Common myeloid progenitor, CD34-positive (primary cell): ENCODE measurements at regions of chr11 and their contacts with region 1.

Region 1: GRCh38 chr11:61947486-61948210 is 2.5 kb upstream of the BEST1 start:
- DNase-seq: peak; percentile 77 to 85 (median 78)
- H3K4me3 ChIP-seq: no peak overlapping the region
- H3K27ac ChIP-seq: no peak overlapping the region
- H3K4me1 ChIP-seq: peaks cover 0 to 5% (median 1%) of the 10 kb centered on the region in 4 experiments
- H3K27me3 ChIP-seq: no peaks in the 10 kb centered on the region

Region 2: GRCh38 chr11:61587521-61588453 is 359.9 kb before region 1 on chr11:
- CTCF ChIA-PET with region 1: no interaction called
- POLR2A ChIA-PET with region 1: no interaction called
- DNase-seq: peak; percentile 17 to 42 (median 41)
- H3K4me3 ChIP-seq: peak overlapping the region in 3 of 7 experiments; percentile 24 to 54 (median 29)
- H3K27ac ChIP-seq: no peak overlapping the region
- H3K4me1 ChIP-seq: peaks cover 0 to 16% (median 7%) of the 10 kb centered on the region in 4 experiments
- H3K27me3 ChIP-seq: peaks cover 0 to 77% (median 42%) of the 10 kb centered on the region in 5 experiments

Region 3: DNA sequence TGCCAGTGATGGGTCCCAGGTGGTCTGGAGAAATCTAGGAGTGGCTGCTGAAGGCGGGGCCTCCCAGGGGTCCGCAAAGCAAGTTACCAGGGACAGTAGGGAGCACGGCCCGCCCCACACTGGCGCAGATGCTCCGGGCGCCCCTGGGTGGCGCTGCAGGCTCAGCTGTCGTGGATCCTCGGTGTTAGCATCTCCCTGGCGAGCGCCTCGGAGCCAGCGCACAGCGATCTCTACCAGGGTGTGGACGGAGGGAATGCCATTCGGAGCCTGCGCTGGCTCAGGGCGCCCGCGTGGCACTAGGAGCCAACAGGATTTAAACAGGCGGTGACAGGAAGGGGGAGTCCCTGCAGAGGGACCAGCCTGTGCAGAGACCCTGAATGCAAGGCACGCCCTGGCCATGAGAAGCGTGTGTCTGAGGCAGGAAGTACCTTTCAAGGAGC is 76.5 kb before region 1 on chr11:
- CTCF ChIA-PET with region 1: interaction called, 14 read pairs
- POLR2A ChIA-PET with region 1: no interaction called
- DNase-seq: peak; percentile 65 to 76 (median 76)
- H3K4me3 ChIP-seq: peak overlapping the region in 4 of 7 experiments; percentile 26 to 72 (median 47)
- H3K27ac ChIP-seq: no peak overlapping the region
- H3K4me1 ChIP-seq: peaks cover 0 to 14% (median 6%) of the 10 kb centered on the region in 4 experiments
- H3K27me3 ChIP-seq: peaks cover 0 to 2% (median 0%) of the 10 kb centered on the region in 5 experiments

Region 4: GRCh38 chr11:61899146-61899841 is 48.4 kb before region 1 on chr11:
- CTCF ChIA-PET with region 1: interaction called, 380 read pairs
- POLR2A ChIA-PET with region 1: interaction called, 5 read pairs
- DNase-seq: peak; percentile 87 to 94 (median 92)
- H3K4me3 ChIP-seq: no peak overlapping the region
- H3K27ac ChIP-seq: no peak overlapping the region
- H3K4me1 ChIP-seq: peaks cover 0 to 7% (median 2%) of the 10 kb centered on the region in 4 experiments
- H3K27me3 ChIP-seq: peaks cover 0 to 2% (median 0%) of the 10 kb centered on the region in 5 experiments

Region 5: DNA sequence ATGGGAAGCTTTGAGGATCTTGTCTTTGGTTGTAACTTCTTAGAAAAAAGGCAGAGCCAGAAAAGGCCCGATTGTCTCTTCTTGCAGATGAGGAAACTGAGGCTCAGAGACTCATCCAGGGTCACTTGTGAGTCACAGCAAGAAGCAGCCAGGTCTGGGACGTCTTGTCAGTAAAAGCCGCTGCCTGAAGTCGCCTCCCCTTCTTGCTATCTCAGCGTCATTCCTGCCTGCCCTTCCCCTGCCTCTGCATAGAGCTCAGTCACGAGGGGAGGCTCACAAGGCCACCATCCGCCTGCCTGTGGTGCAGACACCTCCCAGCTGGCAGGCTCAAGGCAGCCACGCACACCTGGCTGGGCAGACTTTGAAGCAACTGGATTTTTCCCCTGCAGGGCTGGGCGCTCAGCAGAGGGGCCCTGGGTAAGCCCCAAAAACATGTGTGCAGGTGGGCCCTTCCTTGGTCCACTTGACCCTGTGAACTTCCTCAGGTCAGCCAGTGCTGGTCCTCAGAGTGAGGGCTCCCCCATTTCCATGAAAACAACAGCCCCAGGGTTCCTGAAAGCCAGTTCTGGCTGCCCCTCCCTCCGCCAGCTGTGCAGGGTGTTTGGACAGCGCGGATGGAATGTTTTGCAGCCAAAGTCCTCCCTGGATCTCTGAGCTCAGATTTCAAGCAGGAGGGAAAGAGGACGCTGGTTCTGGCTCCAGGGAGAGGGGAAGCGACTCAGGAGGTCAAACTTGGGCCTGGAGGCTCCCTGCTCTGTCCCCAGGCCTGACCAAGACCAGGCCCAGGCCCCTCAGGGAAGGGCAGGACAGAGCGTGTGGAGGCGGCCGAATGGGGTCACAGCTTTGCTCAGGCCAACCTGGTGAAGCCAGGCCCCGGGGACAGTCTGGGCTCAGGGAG is 24.2 kb before region 1 on chr11:
- CTCF ChIA-PET with region 1: interaction called, 23 read pairs
- POLR2A ChIA-PET with region 1: no interaction called
- DNase-seq: peak in 2 of 3 donors; percentile 43 to 69
- H3K4me3 ChIP-seq: no peak overlapping the region
- H3K27ac ChIP-seq: no peak overlapping the region
- H3K4me1 ChIP-seq: peaks cover 0 to 21% (median 6%) of the 10 kb centered on the region in 4 experiments
- H3K27me3 ChIP-seq: peaks cover 0 to 15% (median 0%) of the 10 kb centered on the region in 5 experiments

Region 6: DNA sequence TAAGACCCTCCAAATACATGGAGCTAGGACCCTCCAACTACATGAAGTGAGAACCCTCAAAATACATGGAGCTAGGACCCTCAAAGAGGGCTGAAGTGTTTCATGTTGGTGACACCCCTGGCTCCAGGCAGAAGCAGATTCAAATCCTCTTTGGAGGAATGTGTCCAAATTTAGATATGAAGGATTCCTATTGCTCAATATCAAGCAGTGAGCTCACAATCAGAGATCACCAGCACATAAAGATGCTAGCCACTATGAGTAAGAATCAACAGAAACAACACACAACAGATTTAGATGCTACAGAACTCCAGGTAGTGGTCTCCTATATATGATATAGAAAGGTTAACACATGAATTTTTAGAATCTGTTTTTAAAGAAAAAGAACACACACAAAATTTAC is 19.0 kb before region 1 on chr11:
- CTCF ChIA-PET with region 1: interaction called, 23 read pairs
- POLR2A ChIA-PET with region 1: no interaction called
- DNase-seq: no peak
- H3K4me3 ChIP-seq: no peak overlapping the region
- H3K27ac ChIP-seq: no peak overlapping the region
- H3K4me1 ChIP-seq: no peaks in the 10 kb centered on the region
- H3K27me3 ChIP-seq: no peaks in the 10 kb centered on the region

Region 7: DNA sequence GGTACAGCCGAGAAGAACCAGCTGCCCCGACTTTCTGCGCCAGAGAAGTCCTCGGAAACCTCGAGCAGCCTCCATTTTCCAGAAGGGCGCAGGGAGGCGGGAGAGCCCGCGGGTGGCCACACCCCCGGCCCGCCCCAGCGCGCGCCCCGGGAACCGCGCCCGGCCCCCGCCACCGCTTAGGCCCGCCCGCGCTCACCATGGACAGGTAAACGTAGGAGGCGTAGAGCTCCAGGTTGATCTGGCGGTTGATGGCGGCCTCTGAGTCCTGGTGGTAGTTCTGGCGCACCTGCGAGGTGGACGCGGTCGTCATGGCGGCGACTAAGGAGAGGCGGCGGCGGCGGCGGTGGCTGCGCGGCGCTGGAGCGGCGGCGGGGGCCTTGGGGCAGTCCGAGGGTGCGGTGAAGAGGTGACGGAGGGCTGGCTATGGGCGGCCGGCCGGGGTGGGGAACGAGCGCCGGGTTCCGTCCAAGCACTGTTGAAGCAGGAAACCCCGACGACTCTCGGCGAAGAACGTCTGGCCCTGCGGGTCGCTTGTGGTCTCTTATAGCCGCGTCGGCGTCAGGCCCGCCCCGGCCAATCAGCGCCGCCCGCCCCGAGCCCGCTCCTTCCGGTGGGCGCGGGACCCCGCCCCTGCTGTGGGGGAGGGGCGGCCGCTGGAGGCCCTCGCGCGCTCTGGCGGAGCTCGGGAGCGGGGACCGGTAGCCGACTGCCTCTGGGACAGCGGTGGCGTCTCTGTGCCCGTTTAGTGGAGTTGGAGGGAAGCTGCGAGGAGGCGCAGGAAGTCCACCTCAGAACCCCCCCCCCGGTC is 19.7 kb after region 1 on chr11 and contains the start of gene FTH1:
- CTCF ChIA-PET with region 1: interaction called, 17 read pairs
- POLR2A ChIA-PET with region 1: interaction called, 5 read pairs
- DNase-seq: peak; percentile 90 to 95 (median 95)
- H3K4me3 ChIP-seq: peak within 1 kb of the TSS; percentile 64 to 100 (median 97)
- H3K27ac ChIP-seq: peak within 1 kb of the TSS; percentile 86 to 93
- H3K4me1 ChIP-seq: peaks cover 45 to 89% (median 78%) of the 10 kb centered on the region in 4 experiments
- H3K27me3 ChIP-seq: no peaks in the 10 kb centered on the region

Region 8: DNA sequence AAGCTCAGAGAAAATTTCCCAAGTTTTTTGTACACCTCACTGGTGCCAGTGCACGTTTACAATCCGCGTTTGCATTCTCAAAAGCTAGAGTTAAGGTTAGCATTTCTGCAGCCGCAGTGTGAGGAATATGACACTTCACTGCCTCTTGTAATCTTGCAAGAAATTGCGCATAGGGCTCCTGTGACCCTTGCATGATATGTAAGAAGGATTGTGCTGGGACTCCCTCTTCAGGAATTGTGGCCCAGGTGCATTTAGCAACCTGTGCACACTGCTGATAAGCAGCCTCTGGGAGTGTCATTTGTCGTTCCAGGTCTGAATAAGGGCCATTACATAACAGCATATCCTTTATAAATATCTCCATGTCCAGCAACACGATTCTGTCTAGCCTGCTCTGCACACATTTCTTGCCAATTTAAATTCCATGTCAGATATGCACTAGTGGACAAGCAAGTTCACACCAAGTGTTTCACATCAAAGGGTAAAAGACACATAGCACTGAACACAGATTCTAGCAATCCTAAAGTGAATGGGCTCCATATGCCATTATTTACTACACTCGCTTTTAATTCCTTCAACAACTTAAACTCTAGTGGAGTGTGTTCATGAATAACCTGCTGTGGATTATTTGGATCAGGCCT is 107.0 kb after region 1 on chr11:
- CTCF ChIA-PET with region 1: interaction called, 13 read pairs
- POLR2A ChIA-PET with region 1: no interaction called
- DNase-seq: peak; percentile 54 to 61 (median 59)
- H3K4me3 ChIP-seq: no peak overlapping the region
- H3K27ac ChIP-seq: no peak overlapping the region
- H3K4me1 ChIP-seq: no peaks in the 10 kb centered on the region
- H3K27me3 ChIP-seq: no peaks in the 10 kb centered on the region